A673 (cell line): ENCODE measurements at regions of chr10 and their contacts with region 1.

Region 1: DNA sequence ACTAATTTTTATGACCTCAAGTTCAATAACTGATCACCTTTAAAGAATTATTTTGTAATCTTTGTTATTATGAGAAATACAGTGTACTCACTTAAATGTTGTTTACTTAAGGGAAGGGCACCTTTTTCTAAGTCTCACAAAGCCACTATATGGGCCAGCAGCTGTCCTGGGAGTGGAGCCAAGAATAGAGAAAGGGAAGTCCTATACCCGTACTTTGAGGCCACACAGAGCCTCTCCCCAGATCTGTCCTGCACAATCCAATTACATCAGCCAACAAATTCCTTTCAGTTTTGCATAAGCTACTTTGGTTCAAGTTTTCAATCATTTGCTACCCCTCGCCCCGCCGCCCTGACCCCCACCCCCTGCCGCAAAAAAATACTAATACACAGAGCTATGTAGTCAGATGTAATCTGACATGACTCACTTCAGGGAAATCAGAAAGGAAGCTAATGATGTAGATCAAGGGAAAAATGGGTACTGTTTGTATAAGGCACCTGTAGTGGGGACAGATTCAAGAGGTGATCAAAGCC is 297.4 kb upstream of the NEBL start:
- DNase-seq: peak; percentile 67
- H3K4me3 ChIP-seq: no peak overlapping the region
- H3K27ac ChIP-seq: no peak overlapping the region
- H3K4me1 ChIP-seq: peaks cover 13% of the 10 kb centered on the region
- H3K27me3 ChIP-seq: no peaks in the 10 kb centered on the region
- CTCF ChIP-seq: no peak

Region 2: GRCh38 chr10:20972925-20973324 is 221.6 kb before region 1 on chr10:
- CTCF ChIA-PET with region 1: no interaction called
- POLR2A ChIA-PET with region 1: interaction called, 14 read pairs
- intact Hi-C with region 1: no loop called
- DNase-seq: no peak
- H3K4me3 ChIP-seq: no peak overlapping the region
- H3K27ac ChIP-seq: no peak overlapping the region
- H3K4me1 ChIP-seq: peaks cover 6% of the 10 kb centered on the region
- H3K27me3 ChIP-seq: no peaks in the 10 kb centered on the region
- CTCF ChIP-seq: no peak

Region 3: GRCh38 chr10:21048068-21048467 is 146.5 kb before region 1 on chr10:
- CTCF ChIA-PET with region 1: no interaction called
- POLR2A ChIA-PET with region 1: no interaction called
- intact Hi-C with region 1: no loop called
- DNase-seq: no peak
- H3K4me3 ChIP-seq: no peak overlapping the region
- H3K27ac ChIP-seq: no peak overlapping the region
- H3K4me1 ChIP-seq: peaks cover 5% of the 10 kb centered on the region
- H3K27me3 ChIP-seq: no peaks in the 10 kb centered on the region
- CTCF ChIP-seq: no peak

Region 4: GRCh38 chr10:21181462-21181861 is 13.1 kb before region 1 on chr10:
- CTCF ChIA-PET with region 1: no interaction called
- POLR2A ChIA-PET with region 1: interaction called, 11 read pairs
- intact Hi-C with region 1: no loop called
- DNase-seq: no peak
- H3K4me3 ChIP-seq: no peak overlapping the region
- H3K27ac ChIP-seq: no peak overlapping the region
- H3K4me1 ChIP-seq: no peaks in the 10 kb centered on the region
- H3K27me3 ChIP-seq: no peaks in the 10 kb centered on the region
- CTCF ChIP-seq: no peak